GM12878 (cell line): ENCODE measurements at regions of chr2 and their contacts with region 1.

Region 1: GRCh38 chr2:199606193-199606780 is 148.5 kb upstream of the SATB2 start:
- DNase-seq: no peak
- ATAC-seq: no peak
- H3K4me3 ChIP-seq: no peak overlapping the region
- H3K27ac ChIP-seq: no peak overlapping the region
- H3K4me1 ChIP-seq: no peaks in the 10 kb centered on the region
- H3K27me3 ChIP-seq: no peaks in the 10 kb centered on the region
- CTCF ChIP-seq: no peak
- EP300 ChIP-seq: no peak
- POLR2A ChIP-seq: no peak
- RAD21 ChIP-seq: no peak

Region 2: GRCh38 chr2:198374375-198375082 is 1231.8 kb before region 1 on chr2:
- CTCF ChIA-PET with region 1: interaction called, 3 read pairs
- POLR2A ChIA-PET with region 1: no interaction called
- RAD21 ChIA-PET with region 1: no interaction called
- SMC1A ChIA-PET with region 1: no interaction called
- in situ Hi-C with region 1: no loop called
- intact Hi-C with region 1: loop called (anchors 5 kb)
- DNase-seq: no peak
- ATAC-seq: no peak
- H3K4me3 ChIP-seq: no peak overlapping the region
- H3K27ac ChIP-seq: no peak overlapping the region
- H3K4me1 ChIP-seq: peaks cover 9% of the 10 kb centered on the region
- H3K27me3 ChIP-seq: peaks cover under 1 to 6% of the 10 kb centered on the region in 2 experiments; a peak in 2 of 4 replicates
- CTCF ChIP-seq: peak; percentile 52 to 70 (median 55); a peak in 5 of 6 replicates
- EP300 ChIP-seq: no peak
- POLR2A ChIP-seq: no peak
- RAD21 ChIP-seq: peak; percentile 73

Region 3: GRCh38 chr2:199646439-199646838 is 40.2 kb after region 1 on chr2:
- CTCF ChIA-PET with region 1: no interaction called
- POLR2A ChIA-PET with region 1: no interaction called
- RAD21 ChIA-PET with region 1: no interaction called
- SMC1A ChIA-PET with region 1: no interaction called
- in situ Hi-C with region 1: no loop called
- intact Hi-C with region 1: no loop called
- DNase-seq: peak; percentile 16
- ATAC-seq: peak; percentile 62
- H3K4me3 ChIP-seq: no peak overlapping the region
- H3K27ac ChIP-seq: no peak overlapping the region
- H3K4me1 ChIP-seq: no peaks in the 10 kb centered on the region
- H3K27me3 ChIP-seq: no peaks in the 10 kb centered on the region; a peak in 1 of 4 replicates
- CTCF ChIP-seq: no peak
- EP300 ChIP-seq: no peak
- POLR2A ChIP-seq: no peak
- RAD21 ChIP-seq: no peak